Activated naive CD4-positive, alpha-beta T cell treated with anti-CD3 and anti-CD28 coated beads for 36 hours (primary cell): ENCODE measurements at regions of chr19 and their contacts with region 1.

Region 1: DNA sequence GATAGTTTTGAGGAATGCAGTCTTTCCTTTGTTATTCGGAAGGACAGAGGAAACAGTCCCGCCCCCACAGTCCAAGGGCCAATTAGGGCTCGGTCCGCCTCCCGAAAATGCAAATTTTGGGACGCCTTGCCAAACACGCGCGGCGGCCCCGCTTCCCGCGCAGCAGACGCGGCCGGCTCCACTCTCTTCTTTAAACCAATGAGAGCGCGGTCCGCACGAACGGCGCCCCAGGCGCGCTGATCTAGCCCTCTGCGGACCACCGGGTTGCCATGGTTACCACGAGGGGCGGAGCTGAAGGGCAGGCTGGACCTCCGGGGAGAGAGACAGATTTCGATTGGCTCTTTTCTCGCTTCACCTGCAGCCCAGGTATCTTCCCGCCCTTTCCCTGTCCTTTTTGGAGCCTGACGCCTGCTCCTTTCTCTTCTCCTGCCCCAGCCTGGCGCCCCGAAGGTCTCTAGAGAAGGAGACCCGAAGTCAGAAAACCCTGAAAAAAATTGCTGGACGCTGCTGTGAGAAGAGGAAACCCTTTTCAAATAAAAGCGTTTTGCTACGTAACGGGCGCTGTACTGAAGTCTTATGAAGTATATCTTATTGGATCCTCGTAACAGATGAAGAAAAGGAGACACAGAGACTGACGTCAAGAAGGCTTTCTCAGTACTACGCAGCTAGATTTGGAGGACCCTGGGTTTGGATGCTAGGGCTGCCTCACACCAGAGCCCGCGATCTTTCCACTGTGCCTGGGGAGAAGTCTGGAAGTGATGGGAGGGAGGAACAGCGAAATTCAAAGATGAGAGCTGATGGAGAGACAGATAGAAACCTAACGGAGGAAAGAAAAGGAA is 2.0 kb downstream of the PTH2 start:
- DNase-seq: peak; percentile 60
- H3K4me3 Mint-ChIP-seq: peak overlapping the region; percentile 31
- H3K27ac Mint-ChIP-seq: no peak overlapping the region
- H3K4me1 Mint-ChIP-seq: peaks cover 33% of the 10 kb centered on the region
- H3K27me3 Mint-ChIP-seq: peaks cover 58% of the 10 kb centered on the region

Region 2: GRCh38 chr19:49409441-49410029 is 11.7 kb before region 1 on chr19:
- CTCF ChIA-PET with region 1: interaction called, 15 read pairs
- intact Hi-C with region 1: no loop called
- DNase-seq: peak; percentile 40
- H3K4me3 Mint-ChIP-seq: peak overlapping the region; percentile 1
- H3K27ac Mint-ChIP-seq: peak overlapping the region; percentile 46
- H3K4me1 Mint-ChIP-seq: peaks cover 54% of the 10 kb centered on the region
- H3K27me3 Mint-ChIP-seq: no peaks in the 10 kb centered on the region

Region 3: GRCh38 chr19:49528211-49528771 is 107.0 kb after region 1 on chr19:
- CTCF ChIA-PET with region 1: no interaction called
- intact Hi-C with region 1: no loop called
- DNase-seq: no peak
- H3K4me3 Mint-ChIP-seq: peak overlapping the region; percentile 68
- H3K27ac Mint-ChIP-seq: no peak overlapping the region
- H3K4me1 Mint-ChIP-seq: peaks cover 21% of the 10 kb centered on the region
- H3K27me3 Mint-ChIP-seq: no peaks in the 10 kb centered on the region